ENCODE measurements at regions of chr1 and their contacts with region 1.

Region 1: DNA sequence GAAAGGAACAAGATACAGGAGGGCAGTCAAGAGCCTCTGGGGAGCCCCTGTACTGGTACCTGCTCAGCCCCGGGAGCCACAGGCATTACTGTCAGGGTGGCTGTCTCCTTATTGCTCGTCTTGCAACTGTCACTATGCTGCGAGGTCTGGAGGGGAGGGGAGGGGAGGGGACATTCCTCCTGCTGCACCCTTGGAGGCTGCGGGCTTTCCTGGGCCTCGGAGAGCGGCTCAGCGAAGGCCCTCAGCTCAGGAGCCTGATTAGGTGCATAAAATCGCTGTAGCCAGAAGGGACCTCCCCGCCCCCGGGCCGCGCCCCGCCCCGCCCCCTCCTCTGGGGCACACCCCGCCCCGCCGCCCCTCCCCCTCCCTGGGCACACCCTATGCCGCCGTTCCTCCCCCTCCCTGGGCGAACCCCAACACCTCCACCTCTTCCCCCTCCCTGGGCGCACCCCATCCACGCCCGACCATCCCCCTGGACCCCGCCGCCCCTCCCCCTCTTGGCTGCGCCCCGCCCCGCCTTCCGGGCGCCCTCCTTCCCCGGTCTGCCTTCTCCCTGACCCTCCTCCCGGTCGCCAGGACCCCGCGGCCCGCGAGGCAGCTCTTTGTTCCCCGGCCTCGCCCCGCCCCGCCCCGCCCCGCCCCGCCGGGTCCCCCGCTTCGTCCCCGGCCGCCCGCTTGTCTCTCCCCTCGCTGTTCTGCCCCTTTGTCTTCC is 35.5 kb downstream of the CACHD1 start:
- DNase-seq: peak; percentile 77
- H3K4me3 Mint-ChIP-seq: peak overlapping the region; percentile 88
- H3K27ac Mint-ChIP-seq: peak overlapping the region; percentile 77
- H3K4me1 Mint-ChIP-seq: peaks cover 29% of the 10 kb centered on the region
- H3K27me3 Mint-ChIP-seq: no peaks in the 10 kb centered on the region

Region 2: DNA sequence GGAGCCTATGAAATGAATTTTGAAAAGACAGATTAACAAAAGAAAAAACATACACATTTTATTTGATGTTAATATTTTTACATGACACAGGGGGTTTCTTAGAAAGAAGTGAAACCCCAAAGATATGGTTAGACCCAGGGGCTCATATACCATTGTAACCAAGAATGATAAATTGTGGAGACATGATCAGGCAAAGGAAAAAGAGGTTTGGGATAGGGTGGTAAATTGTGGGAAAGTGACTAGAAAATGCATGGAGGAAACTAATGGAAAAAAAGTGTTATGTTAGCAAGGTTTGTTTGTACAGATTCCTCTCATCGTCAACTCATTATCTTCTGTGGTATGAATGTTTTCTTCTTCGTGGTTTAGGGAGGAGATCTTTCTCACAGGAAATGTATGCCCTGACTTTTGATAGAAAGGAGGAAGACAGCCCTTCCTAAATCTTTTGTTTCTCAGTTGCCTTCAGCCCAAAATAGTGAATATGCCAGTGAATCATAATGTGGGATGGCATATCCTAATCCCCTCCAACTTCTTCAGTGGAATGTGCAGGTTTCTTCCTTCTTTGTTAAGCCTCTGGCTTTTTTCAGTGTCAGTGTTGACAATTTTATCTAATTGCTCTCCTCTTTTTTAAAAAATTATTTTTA is 442.3 kb before region 1 on chr1:
- CTCF ChIA-PET with region 1: no interaction called
- intact Hi-C with region 1: no loop called
- DNase-seq: no peak
- H3K4me3 Mint-ChIP-seq: no peak overlapping the region
- H3K27ac Mint-ChIP-seq: no peak overlapping the region
- H3K4me1 Mint-ChIP-seq: peaks cover 24% of the 10 kb centered on the region
- H3K27me3 Mint-ChIP-seq: peaks cover 9% of the 10 kb centered on the region

Region 3: GRCh38 chr1:64527165-64527564 is 21.8 kb after region 1 on chr1:
- CTCF ChIA-PET with region 1: no interaction called
- intact Hi-C with region 1: loop called (anchors 1 kb)
- DNase-seq: peak; percentile 42
- H3K4me3 Mint-ChIP-seq: no peak overlapping the region
- H3K27ac Mint-ChIP-seq: no peak overlapping the region
- H3K4me1 Mint-ChIP-seq: peaks cover 40% of the 10 kb centered on the region
- H3K27me3 Mint-ChIP-seq: no peaks in the 10 kb centered on the region

Region 4: GRCh38 chr1:64539781-64540218 is 34.4 kb after region 1 on chr1:
- CTCF ChIA-PET with region 1: no interaction called
- intact Hi-C with region 1: loop called (anchors 2 kb)
- DNase-seq: peak; percentile 31
- H3K4me3 Mint-ChIP-seq: peak overlapping the region; percentile 47
- H3K27ac Mint-ChIP-seq: no peak overlapping the region
- H3K4me1 Mint-ChIP-seq: peaks cover 55% of the 10 kb centered on the region
- H3K27me3 Mint-ChIP-seq: no peaks in the 10 kb centered on the region

Region 5: GRCh38 chr1:64686828-64687724 is 181.7 kb after region 1 on chr1:
- CTCF ChIA-PET with region 1: no interaction called
- intact Hi-C with region 1: loop called (anchors 5 kb)
- DNase-seq: peak; percentile 39
- H3K4me3 Mint-ChIP-seq: no peak overlapping the region
- H3K27ac Mint-ChIP-seq: no peak overlapping the region
- H3K4me1 Mint-ChIP-seq: peaks cover 5% of the 10 kb centered on the region
- H3K27me3 Mint-ChIP-seq: no peaks in the 10 kb centered on the region

Region 6: DNA sequence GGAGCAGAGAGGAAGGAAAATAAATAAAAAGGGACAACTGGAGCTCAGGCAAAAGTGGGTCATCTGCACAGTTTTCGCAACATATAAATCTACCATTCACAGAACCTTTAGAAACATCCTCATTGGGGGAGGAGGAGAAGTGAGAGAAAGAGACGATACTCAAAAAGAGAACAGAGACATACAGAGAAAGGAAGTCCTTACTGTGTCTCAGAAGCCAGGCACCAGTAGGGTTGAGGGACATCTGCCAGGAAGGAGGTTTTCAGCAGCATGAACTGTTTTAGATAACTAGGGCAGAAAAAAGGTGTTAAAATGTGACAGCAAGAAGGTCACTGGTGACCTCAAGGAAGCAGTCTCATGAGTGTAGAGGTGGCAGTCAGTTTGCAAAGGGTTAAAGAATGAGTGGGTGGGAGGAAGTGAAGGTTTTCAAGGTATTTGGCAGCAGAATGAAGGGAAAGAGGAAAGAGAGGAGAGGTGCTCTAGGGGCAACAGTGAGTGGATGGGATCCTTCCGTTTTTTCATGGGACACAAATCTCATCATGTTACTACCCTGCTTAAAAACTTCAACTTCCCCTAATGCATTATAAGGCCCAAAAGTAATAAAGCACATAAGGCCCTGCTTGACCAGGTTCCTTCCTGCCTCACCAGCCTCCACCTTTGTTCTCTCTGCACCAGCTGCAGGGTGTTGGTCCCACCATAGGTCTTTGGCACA is 451.5 kb after region 1 on chr1:
- CTCF ChIA-PET with region 1: no interaction called
- intact Hi-C with region 1: loop called (anchors 5 kb)
- DNase-seq: peak; percentile 79
- H3K4me3 Mint-ChIP-seq: no peak overlapping the region
- H3K27ac Mint-ChIP-seq: no peak overlapping the region
- H3K4me1 Mint-ChIP-seq: peaks cover 63% of the 10 kb centered on the region
- H3K27me3 Mint-ChIP-seq: no peaks in the 10 kb centered on the region

Region 7: DNA sequence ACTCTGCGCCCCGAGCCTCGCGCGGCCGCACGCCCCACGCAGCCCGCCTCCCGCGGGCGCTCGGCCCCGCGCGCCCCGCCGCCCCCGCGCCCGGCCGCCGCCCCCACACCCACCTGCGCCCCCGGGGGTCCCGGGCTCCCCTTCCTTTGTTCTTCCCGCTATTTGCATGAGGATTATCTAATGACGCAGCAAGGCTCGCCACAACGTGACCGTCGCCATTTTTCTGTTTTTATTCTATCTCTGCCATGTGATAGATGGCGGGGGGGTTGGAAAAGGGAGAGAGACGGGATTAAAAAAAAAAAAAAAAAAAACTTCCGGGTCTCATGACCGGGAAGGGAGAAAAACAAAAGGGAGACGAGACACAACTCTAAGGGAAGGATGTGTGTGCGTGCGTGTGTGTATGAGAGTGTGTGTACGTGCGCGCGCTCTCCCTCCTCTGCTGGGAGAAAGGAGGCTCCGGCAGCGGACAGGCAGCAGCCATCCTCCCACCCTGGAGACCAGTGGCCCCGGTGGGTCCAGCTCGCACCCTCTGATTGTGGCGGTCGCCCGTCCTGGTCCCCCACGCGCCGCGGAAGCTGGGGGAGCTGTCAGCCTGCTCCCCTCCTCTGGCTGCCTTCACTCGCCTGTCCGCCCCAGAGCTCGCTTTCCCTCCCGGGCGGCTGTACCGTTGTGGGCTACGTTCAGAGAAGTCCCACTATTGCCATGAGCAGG is 562.3 kb after region 1 on chr1:
- CTCF ChIA-PET with region 1: no interaction called
- intact Hi-C with region 1: loop called (anchors 5 kb)
- DNase-seq: peak; percentile 71
- H3K4me3 Mint-ChIP-seq: peak overlapping the region; percentile 87
- H3K27ac Mint-ChIP-seq: peak overlapping the region; percentile 95
- H3K4me1 Mint-ChIP-seq: peaks cover 51% of the 10 kb centered on the region
- H3K27me3 Mint-ChIP-seq: no peaks in the 10 kb centered on the region